ENCODE measurements at regions of chr12 and their contacts with region 1.

Region 1: DNA sequence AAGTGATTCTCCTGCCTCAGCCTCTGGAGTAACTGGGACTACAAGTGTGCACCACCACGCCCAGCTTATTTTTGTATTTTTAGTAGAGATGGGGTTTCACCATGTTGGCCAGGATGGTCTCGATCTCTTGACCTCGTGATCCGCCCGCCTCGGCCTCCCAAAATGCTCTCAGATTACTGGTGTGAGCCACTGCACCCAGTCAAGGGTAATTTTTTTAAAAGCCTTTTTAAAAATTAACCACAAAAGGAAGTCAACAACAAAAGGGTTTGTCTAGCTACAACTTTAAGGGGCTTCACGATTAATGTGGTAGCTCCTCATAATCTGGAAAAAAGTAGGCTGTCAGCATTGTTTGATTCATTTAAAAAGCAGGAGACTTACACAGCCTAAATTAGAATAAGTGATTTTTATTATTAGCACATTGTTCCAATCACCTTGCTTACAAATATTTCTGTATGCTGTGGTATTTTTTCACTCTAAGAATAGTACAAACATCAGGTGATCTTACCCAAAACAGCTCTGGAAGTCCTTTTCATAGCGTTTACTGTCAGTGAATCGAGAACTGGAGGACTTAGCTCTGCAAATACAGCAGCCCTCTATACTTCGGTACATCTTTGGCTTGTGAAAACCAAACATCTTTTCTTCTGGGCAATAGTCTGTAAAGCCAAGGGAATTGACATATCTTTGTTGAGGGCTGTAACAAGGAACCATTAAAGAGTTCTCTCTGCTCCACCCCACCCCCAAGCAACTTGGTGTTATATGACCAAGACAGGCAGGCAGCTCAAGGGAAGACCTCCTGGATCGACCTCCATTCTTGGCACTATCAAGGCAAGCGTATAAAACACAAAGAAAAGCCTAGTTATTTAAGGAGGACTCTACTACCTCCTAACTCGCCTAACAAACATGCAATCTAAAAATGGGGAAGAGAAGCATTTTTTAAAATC is 28.1 kb downstream of the SINHCAF start:
- DNase-seq: peak; percentile 45
- ATAC-seq: peak; percentile 53
- H3K4me3 ChIP-seq: peak overlapping the region; percentile 46; the same call in 1 of the 2 replicates
- H3K27ac ChIP-seq: peak overlapping the region; percentile 91
- H3K4me1 ChIP-seq: peaks cover 32% of the 10 kb centered on the region
- H3K27me3 ChIP-seq: no peaks in the 10 kb centered on the region
- CTCF ChIP-seq: no peak
- EP300 ChIP-seq: no peak
- POLR2A ChIP-seq: no peak
- RAD21 ChIP-seq: no peak

Region 2: GRCh38 chr12:31215518-31216232 is 82.2 kb before region 1 on chr12:
- CTCF ChIA-PET with region 1: no interaction called
- POLR2A ChIA-PET with region 1: no interaction called
- RAD21 ChIA-PET with region 1: no interaction called
- SMC1A ChIA-PET with region 1: no interaction called
- in situ Hi-C with region 1: no loop called
- intact Hi-C with region 1: no loop called
- DNase-seq: no peak
- ATAC-seq: peak; percentile 37
- H3K4me3 ChIP-seq: no peak overlapping the region
- H3K27ac ChIP-seq: no peak overlapping the region
- H3K4me1 ChIP-seq: no peaks in the 10 kb centered on the region
- H3K27me3 ChIP-seq: no peaks in the 10 kb centered on the region; a peak in 2 of 4 replicates
- CTCF ChIP-seq: no peak
- EP300 ChIP-seq: no peak
- POLR2A ChIP-seq: no peak
- RAD21 ChIP-seq: no peak

Region 3: GRCh38 chr12:31228811-31229792 is 68.7 kb before region 1 on chr12:
- CTCF ChIA-PET with region 1: no interaction called
- POLR2A ChIA-PET with region 1: no interaction called
- RAD21 ChIA-PET with region 1: no interaction called
- SMC1A ChIA-PET with region 1: no interaction called
- in situ Hi-C with region 1: no loop called
- intact Hi-C with region 1: no loop called
- DNase-seq: no peak
- ATAC-seq: no peak; the same call in 2 of the 3 replicates
- H3K4me3 ChIP-seq: no peak overlapping the region
- H3K27ac ChIP-seq: no peak overlapping the region
- H3K4me1 ChIP-seq: no peaks in the 10 kb centered on the region
- H3K27me3 ChIP-seq: no peaks in the 10 kb centered on the region
- CTCF ChIP-seq: no peak
- EP300 ChIP-seq: no peak
- POLR2A ChIP-seq: no peak
- RAD21 ChIP-seq: no peak

Region 4: GRCh38 chr12:31317471-31318395 is 19.9 kb after region 1 on chr12:
- CTCF ChIA-PET with region 1: interaction called, 11 read pairs
- POLR2A ChIA-PET with region 1: interaction called, 42 read pairs
- RAD21 ChIA-PET with region 1: interaction called, 36 read pairs
- SMC1A ChIA-PET with region 1: interaction called, 78 read pairs
- in situ Hi-C with region 1: no loop called
- intact Hi-C with region 1: loop called (anchors 2 kb)
- DNase-seq: no peak
- ATAC-seq: peak; percentile 44
- H3K4me3 ChIP-seq: peak overlapping the region; percentile 92
- H3K27ac ChIP-seq: peak overlapping the region; percentile 95
- H3K4me1 ChIP-seq: peaks cover 18% of the 10 kb centered on the region; the same call in 1 of the 2 replicates
- H3K27me3 ChIP-seq: no peaks in the 10 kb centered on the region
- CTCF ChIP-seq: no peak
- EP300 ChIP-seq: no peak
- POLR2A ChIP-seq: no peak
- RAD21 ChIP-seq: no peak

Region 5: GRCh38 chr12:31324116-31324844 is 26.4 kb after region 1 on chr12:
- CTCF ChIA-PET with region 1: interaction called, 11 read pairs
- POLR2A ChIA-PET with region 1: interaction called, 42 read pairs
- RAD21 ChIA-PET with region 1: interaction called, 36 read pairs
- SMC1A ChIA-PET with region 1: interaction called, 78 read pairs
- in situ Hi-C with region 1: no loop called
- intact Hi-C with region 1: loop called (anchors 2 kb)
- DNase-seq: no peak
- ATAC-seq: peak; percentile 60
- H3K4me3 ChIP-seq: peak overlapping the region; percentile 92
- H3K27ac ChIP-seq: peak overlapping the region; percentile 95
- H3K4me1 ChIP-seq: peaks cover 7% of the 10 kb centered on the region; the same call in 1 of the 2 replicates
- H3K27me3 ChIP-seq: no peaks in the 10 kb centered on the region
- CTCF ChIP-seq: peak in 2 of 3 experiments; percentile 13 to 18; a peak in 2 of 6 replicates
- EP300 ChIP-seq: no peak
- POLR2A ChIP-seq: peak; percentile 76
- RAD21 ChIP-seq: no peak

Region 6: DNA sequence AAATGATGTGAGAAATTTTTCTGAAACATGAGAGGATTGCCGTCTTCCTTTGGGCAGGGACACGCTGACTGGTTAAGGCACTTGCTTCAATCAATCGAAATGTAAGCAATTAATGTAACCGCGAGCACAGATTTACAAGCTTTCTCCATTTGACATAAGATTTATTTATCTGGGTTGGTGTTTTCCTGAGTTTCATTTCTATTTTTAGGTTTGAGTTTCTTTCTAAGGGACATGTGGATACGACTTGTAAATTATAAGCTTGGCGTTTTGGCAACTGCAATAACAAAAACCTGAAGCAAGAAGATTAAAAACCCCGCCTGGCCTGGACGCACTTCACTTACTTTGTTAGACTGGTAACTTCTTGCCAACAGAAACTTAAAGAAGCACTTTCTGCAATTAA is 48.4 kb after region 1 on chr12:
- CTCF ChIA-PET with region 1: no interaction called
- POLR2A ChIA-PET with region 1: no interaction called
- RAD21 ChIA-PET with region 1: no interaction called
- SMC1A ChIA-PET with region 1: no interaction called
- in situ Hi-C with region 1: no loop called
- intact Hi-C with region 1: no loop called
- DNase-seq: no peak
- ATAC-seq: no peak
- H3K4me3 ChIP-seq: no peak overlapping the region
- H3K27ac ChIP-seq: no peak overlapping the region
- H3K4me1 ChIP-seq: no peaks in the 10 kb centered on the region
- H3K27me3 ChIP-seq: no peaks in the 10 kb centered on the region; a peak in 2 of 4 replicates
- CTCF ChIP-seq: no peak
- EP300 ChIP-seq: no peak
- POLR2A ChIP-seq: no peak
- RAD21 ChIP-seq: no peak

Region 7: GRCh38 chr12:31362759-31363415 is 65.0 kb after region 1 on chr12:
- CTCF ChIA-PET with region 1: interaction called, 14 read pairs
- POLR2A ChIA-PET with region 1: no interaction called
- RAD21 ChIA-PET with region 1: interaction called, 6 read pairs
- SMC1A ChIA-PET with region 1: interaction called, 6 read pairs
- in situ Hi-C with region 1: no loop called
- intact Hi-C with region 1: no loop called
- DNase-seq: peak; percentile 46
- ATAC-seq: peak; percentile 82
- H3K4me3 ChIP-seq: no peak overlapping the region
- H3K27ac ChIP-seq: peak overlapping the region; percentile 45
- H3K4me1 ChIP-seq: peaks cover 22% of the 10 kb centered on the region
- H3K27me3 ChIP-seq: no peaks in the 10 kb centered on the region
- CTCF ChIP-seq: peak; percentile 24 to 63 (median 27); a peak in 4 of 6 replicates
- EP300 ChIP-seq: 0 out of 4 replicates have a peak, but pooled peaks of 1 of the 2 experiments have one; percentile 11
- POLR2A ChIP-seq: peak; percentile 60; the same call in 1 of the 2 replicates
- RAD21 ChIP-seq: peak; percentile 49